IMR-90 (cell line): ENCODE measurements at regions of chr17 and their contacts with region 1.

Region 1: GRCh38 chr17:63919311-63919723 is 678 bp upstream of the GH1 start:
- DNase-seq: peak; percentile 51
- ATAC-seq: peak; percentile 100
- H3K4me3 ChIP-seq: no peak overlapping the region
- H3K27ac ChIP-seq: no peak overlapping the region
- H3K4me1 ChIP-seq: no peaks in the 10 kb centered on the region
- H3K27me3 ChIP-seq: peaks cover 27% of the 10 kb centered on the region
- CTCF ChIP-seq: peak; percentile 86
- POLR2A ChIP-seq: no peak
- RAD21 ChIP-seq: peak; percentile 88

Region 2: GRCh38 chr17:63699638-63700527 is 219.4 kb before region 1 on chr17 and contains the start of gene LIMD2:
- CTCF ChIA-PET with region 1: no interaction called
- POLR2A ChIA-PET with region 1: no interaction called
- dilution Hi-C with region 1: no loop called
- in situ Hi-C with region 1: no loop called
- intact Hi-C with region 1: no loop called
- DNase-seq: no peak
- ATAC-seq: peak; percentile 70
- H3K4me3 ChIP-seq: peak within 1 kb of the TSS; percentile 84
- H3K27ac ChIP-seq: peak within 1 kb of the TSS; percentile 51; the same call in 1 of the 2 replicates
- H3K4me1 ChIP-seq: no peaks in the 10 kb centered on the region
- H3K27me3 ChIP-seq: no peaks in the 10 kb centered on the region
- CTCF ChIP-seq: no peak
- POLR2A ChIP-seq: no peak
- RAD21 ChIP-seq: no peak
- total RNA-seq, gene LIMD2: 4.5 and 4.7 TPM in 2 replicates

Region 3: GRCh38 chr17:63946440-63947367 is 27.4 kb after region 1 on chr17:
- CTCF ChIA-PET with region 1: interaction called, 9 read pairs
- POLR2A ChIA-PET with region 1: no interaction called
- dilution Hi-C with region 1: no loop called
- in situ Hi-C with region 1: no loop called
- intact Hi-C with region 1: loop called (anchors 1 kb)
- DNase-seq: peak; percentile 13
- ATAC-seq: peak; percentile 98
- H3K4me3 ChIP-seq: no peak overlapping the region
- H3K27ac ChIP-seq: no peak overlapping the region
- H3K4me1 ChIP-seq: no peaks in the 10 kb centered on the region
- H3K27me3 ChIP-seq: peaks cover 19% of the 10 kb centered on the region
- CTCF ChIP-seq: peak; percentile 61
- POLR2A ChIP-seq: no peak
- RAD21 ChIP-seq: peak; percentile 36; the same call in 1 of the 2 replicates

Region 4: DNA sequence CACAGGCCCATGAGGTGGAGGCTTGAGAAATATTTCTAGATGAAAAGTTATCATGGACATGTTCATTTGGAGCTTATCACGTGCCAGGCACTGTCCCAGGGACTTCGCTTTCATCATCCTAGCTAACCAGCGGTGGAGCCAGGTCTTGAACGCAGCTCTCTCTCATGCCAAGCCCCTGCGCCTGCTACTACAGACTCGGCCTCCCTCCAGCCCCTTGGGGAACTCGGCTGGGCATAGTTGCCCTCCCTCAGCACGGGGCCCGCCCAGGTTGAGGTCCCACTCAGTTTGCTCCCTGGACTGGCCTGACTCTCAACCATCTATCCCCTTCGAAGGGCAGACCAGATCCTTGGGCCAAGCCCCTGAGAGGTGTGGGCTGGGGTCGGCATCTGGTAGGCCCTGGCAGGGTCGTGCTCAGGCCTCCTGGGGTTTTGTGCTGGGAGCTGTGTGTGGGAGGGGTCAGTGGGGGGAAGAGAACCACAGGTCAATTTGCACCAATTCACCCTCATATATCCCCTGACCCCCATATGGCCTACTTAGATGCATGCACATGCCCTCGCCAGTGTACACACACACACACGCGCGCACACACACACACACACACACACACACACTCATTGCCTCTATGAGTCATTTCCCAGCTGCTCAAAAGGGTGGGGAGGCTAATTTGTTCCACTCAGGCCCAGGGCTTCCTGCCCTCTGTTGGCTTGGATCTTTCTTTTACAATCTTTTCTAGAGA is 65.5 kb after region 1 on chr17:
- CTCF ChIA-PET with region 1: interaction called, 9 read pairs
- POLR2A ChIA-PET with region 1: no interaction called
- dilution Hi-C with region 1: no loop called
- in situ Hi-C with region 1: no loop called
- intact Hi-C with region 1: loop called (anchors 1 kb)
- DNase-seq: peak; percentile 91
- ATAC-seq: peak; percentile 95
- H3K4me3 ChIP-seq: no peak overlapping the region
- H3K27ac ChIP-seq: no peak overlapping the region
- H3K4me1 ChIP-seq: peaks cover 8% of the 10 kb centered on the region; the same call in 1 of the 2 replicates
- H3K27me3 ChIP-seq: peaks cover 7% of the 10 kb centered on the region; the same call in 1 of the 2 replicates
- CTCF ChIP-seq: 0 out of 2 replicates have a peak, but pooled peaks have one; percentile 3
- POLR2A ChIP-seq: no peak
- RAD21 ChIP-seq: no peak

Region 5: GRCh38 chr17:64025732-64026294 is 106.5 kb after region 1 on chr17:
- CTCF ChIA-PET with region 1: interaction called, 21 read pairs
- POLR2A ChIA-PET with region 1: interaction called, 3 read pairs
- dilution Hi-C with region 1: no loop called
- in situ Hi-C with region 1: loop called (anchors 10 kb)
- intact Hi-C with region 1: loop called (anchors 1 kb)
- DNase-seq: peak; percentile 70
- ATAC-seq: peak; percentile 88
- H3K4me3 ChIP-seq: no peak overlapping the region
- H3K27ac ChIP-seq: no peak overlapping the region
- H3K4me1 ChIP-seq: 0 out of 2 replicates have a peak, but pooled peaks cover 2% of the 10 kb centered on the region
- H3K27me3 ChIP-seq: peaks cover 4% of the 10 kb centered on the region; the same call in 1 of the 2 replicates
- CTCF ChIP-seq: peak; percentile 86
- POLR2A ChIP-seq: no peak
- RAD21 ChIP-seq: peak; percentile 65